CD8-positive, alpha-beta T cell (primary cell): ENCODE measurements at regions of chr3 and their contacts with region 1.

Region 1: DNA sequence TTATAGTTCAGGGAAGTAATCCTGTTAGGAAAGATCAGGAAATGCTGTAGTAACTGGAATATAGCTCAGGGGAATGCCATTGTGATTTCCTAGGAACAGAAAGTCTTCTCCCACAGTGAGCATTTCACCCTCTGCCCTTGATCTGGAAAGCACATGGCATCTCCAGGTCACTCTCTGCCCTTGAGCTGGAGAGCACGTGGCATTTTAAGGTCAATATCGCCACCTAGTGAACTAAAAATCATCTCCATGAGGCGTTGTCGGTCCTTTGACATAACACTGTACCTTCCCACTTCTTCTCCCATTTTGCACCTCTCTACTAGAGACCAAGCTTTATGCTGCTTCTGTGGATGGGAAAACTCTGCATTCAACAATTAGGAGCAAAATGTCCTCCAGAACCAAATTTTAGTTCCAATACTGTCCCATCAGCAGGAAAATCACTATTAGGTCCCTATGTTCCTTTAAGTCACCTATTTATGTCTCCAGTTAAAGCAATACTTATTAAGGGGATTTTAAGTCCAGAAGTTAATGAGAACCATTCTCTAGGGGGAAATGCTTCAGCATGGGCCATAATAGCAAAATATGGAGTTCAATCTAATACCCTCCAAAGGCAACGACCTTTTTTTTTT is 54.7 kb upstream of the GK5 start:
- DNase-seq: peak in 7 of 9 experiments; percentile 15 to 82 (median 38)
- ATAC-seq: peak; percentile 74
- H3K4me3 ChIP-seq: no peak overlapping the region
- H3K4me3 Mint-ChIP-seq: no peak overlapping the region
- H3K27ac ChIP-seq: no peak overlapping the region
- H3K27ac Mint-ChIP-seq: no peak overlapping the region
- H3K4me1 ChIP-seq: no peaks in the 10 kb centered on the region
- H3K4me1 Mint-ChIP-seq: peaks cover 11% of the 10 kb centered on the region
- H3K27me3 ChIP-seq: no peaks in the 10 kb centered on the region
- H3K27me3 Mint-ChIP-seq: peaks cover 5% of the 10 kb centered on the region
- CTCF ChIP-seq: peak; percentile 70

Region 2: DNA sequence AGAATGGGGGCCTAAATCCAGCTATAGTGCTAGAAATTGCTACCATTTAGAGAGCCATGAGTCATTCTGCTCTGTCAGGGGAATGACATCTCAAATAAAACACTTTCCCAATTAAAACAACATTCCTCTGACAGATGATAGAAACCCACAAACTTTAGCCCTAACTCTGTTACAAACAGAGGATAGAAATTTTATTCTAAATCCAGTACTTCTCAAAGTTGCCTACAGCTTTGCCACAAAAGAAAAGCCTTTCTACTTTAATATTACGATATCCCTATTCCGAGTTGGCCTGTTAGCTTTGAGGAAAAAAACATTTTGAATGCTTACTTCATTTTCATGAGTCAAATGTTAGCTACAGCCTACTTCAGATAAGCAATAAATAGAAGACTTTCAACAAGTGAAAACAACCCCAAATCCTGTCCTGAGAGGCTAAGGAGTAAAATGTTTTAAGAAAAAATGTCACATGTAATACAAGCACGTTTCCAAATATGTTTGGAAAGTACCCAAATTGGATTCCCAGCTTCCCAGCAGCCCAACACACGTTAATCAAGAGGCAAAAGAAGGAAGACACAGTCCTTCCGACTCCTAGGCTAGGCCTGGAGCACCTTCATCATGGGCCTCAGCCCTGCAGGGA is 320.0 kb before region 1 on chr3:
- CTCF ChIA-PET with region 1: interaction called, 4 read pairs
- POLR2A ChIA-PET with region 1: no interaction called
- intact Hi-C with region 1: loop called in 1 of 2 experiments (anchors 1 kb)
- DNase-seq: no peak
- ATAC-seq: no peak
- H3K4me3 ChIP-seq: no peak overlapping the region
- H3K4me3 Mint-ChIP-seq: no peak overlapping the region
- H3K27ac ChIP-seq: no peak overlapping the region
- H3K27ac Mint-ChIP-seq: no peak overlapping the region
- H3K4me1 ChIP-seq: no peaks in the 10 kb centered on the region
- H3K4me1 Mint-ChIP-seq: peaks cover 4% of the 10 kb centered on the region
- H3K27me3 ChIP-seq: no peaks in the 10 kb centered on the region
- H3K27me3 Mint-ChIP-seq: no peaks in the 10 kb centered on the region
- CTCF ChIP-seq: no peak

Region 3: GRCh38 chr3:142124243-142124642 is 155.8 kb before region 1 on chr3:
- CTCF ChIA-PET with region 1: interaction called, 35 read pairs
- POLR2A ChIA-PET with region 1: no interaction called
- intact Hi-C with region 1: loop called (anchors 1 kb)
- DNase-seq: no peak
- ATAC-seq: no peak
- H3K4me3 ChIP-seq: no peak overlapping the region
- H3K4me3 Mint-ChIP-seq: no peak overlapping the region
- H3K27ac ChIP-seq: no peak overlapping the region
- H3K27ac Mint-ChIP-seq: no peak overlapping the region
- H3K4me1 ChIP-seq: no peaks in the 10 kb centered on the region
- H3K4me1 Mint-ChIP-seq: peaks cover 3% of the 10 kb centered on the region
- H3K27me3 ChIP-seq: no peaks in the 10 kb centered on the region
- H3K27me3 Mint-ChIP-seq: no peaks in the 10 kb centered on the region
- CTCF ChIP-seq: no peak

Region 4: DNA sequence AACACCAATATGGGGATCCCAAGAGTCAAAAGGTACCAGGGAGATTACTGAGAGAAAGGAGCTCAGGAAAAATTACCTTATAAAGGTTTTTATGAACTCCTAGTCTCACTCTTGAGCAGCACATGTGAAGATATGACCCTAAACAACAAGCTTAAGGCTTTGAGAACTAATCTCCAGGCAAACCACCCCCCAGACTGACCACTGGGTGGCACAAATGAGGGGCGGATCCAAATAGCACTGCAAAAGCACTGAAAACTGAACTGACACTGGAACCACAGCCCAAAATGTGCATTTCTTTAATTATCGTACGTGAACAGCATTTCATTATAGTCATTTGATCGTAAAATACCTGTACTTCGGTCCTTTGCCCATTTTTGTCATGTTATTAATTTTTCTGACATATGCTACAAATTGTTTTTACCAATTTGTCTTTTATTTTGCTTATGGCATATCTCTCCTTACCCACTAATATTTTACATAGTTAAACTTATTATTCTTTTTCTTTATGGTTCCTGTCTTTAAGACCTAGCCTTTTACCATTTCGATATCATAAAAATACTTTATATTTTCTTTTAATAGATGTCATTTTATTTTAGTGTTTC is 99.2 kb before region 1 on chr3:
- CTCF ChIA-PET with region 1: interaction called, 23 read pairs
- POLR2A ChIA-PET with region 1: no interaction called
- intact Hi-C with region 1: loop called (anchors 1 to 2 kb)
- DNase-seq: peak in 8 of 9 experiments; percentile 6 to 59 (median 26)
- ATAC-seq: no peak
- H3K4me3 ChIP-seq: no peak overlapping the region
- H3K4me3 Mint-ChIP-seq: no peak overlapping the region
- H3K27ac ChIP-seq: no peak overlapping the region
- H3K27ac Mint-ChIP-seq: no peak overlapping the region
- H3K4me1 ChIP-seq: no peaks in the 10 kb centered on the region
- H3K4me1 Mint-ChIP-seq: no peaks in the 10 kb centered on the region
- H3K27me3 ChIP-seq: no peaks in the 10 kb centered on the region
- H3K27me3 Mint-ChIP-seq: no peaks in the 10 kb centered on the region
- CTCF ChIP-seq: no peak